Tibial artery (tissue), 4 donors: ENCODE measurements at regions of chrX and their contacts with region 1.

Region 1: DNA sequence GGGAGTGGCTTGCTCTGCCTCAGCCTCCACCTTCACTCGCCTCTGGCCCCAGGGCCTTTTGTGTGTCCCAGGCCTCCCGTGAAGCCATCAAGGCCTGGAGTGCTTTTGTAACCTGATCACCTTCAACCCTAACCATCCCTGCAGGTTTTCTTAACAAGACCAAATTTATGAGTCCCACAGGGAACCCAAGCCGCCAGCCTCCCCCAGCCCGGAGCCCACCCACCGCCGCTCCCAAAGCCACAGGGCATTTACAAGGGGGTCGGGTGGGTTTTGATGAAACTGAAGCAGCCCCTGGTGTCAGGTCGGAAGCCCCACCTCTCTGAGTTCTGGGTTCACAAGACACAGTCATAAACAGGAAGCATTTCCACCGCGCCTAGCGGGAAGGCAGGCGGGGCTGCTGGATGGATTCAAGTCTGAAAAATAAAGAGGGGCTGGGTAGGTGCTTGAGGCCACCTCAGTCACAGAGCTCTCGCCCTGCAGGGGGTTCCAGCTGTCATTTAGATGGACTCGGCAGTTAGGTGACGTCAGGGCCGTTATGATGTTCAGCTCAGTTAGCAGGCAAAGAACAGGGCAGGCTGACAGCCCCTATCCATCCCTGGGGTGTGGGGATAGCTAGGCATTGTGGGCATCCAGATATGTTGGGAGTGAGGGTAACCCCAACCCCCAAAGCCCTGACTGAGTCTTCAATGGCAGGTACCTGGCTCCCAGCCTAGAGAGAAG is 128.5 kb downstream of the BCOR start:
- DNase-seq: no peak
- H3K4me3 ChIP-seq: no peak overlapping the region
- H3K27ac ChIP-seq: no peak overlapping the region
- H3K4me1 ChIP-seq: no peaks in the 10 kb centered on the region
- H3K27me3 ChIP-seq: no peaks in the 10 kb centered on the region
- CTCF ChIP-seq: no peak

Region 2: GRCh38 chrX:40005292-40006011 is 36.2 kb after region 1 on chrX:
- intact Hi-C with region 1: loop called (anchors 1 kb)
- DNase-seq: no peak
- H3K4me3 ChIP-seq: peak overlapping the region; percentile 25
- H3K27ac ChIP-seq: no peak overlapping the region
- H3K4me1 ChIP-seq: peaks cover 0 to 42% (median 14%) of the 10 kb centered on the region in 4 donors
- H3K27me3 ChIP-seq: no peaks in the 10 kb centered on the region
- CTCF ChIP-seq: no peak